Esophagus squamous epithelium (tissue), 5 donors: ENCODE measurements at regions of chr7 and their contacts with region 1.

Region 1: DNA sequence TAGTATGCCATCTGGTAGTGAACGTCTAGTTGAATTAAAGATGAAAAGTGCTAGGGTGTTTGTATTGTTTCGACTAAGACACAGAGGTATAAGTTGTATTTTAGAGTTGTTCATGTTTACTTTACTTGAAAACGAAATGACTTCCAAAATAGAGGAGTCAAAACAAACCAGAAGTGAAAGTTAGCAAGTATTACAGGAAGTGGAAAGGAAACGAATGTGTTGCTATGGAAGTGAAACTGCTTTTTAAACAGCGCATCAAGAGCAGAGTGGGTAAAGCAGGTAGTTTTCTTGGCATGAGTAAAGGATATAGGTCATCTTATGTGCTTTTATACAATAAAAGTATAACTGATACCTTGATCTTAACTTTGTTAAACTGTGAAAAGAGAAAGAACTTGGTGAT is 20.0 kb upstream of the GALNTL5 start:
- DNase-seq: no peak
- H3K4me3 ChIP-seq: no peak overlapping the region
- H3K27ac ChIP-seq: peak overlapping the region in 2 of 4 donors; percentile 42 to 51
- H3K4me1 ChIP-seq: peaks cover 9 to 17% (median 9%) of the 10 kb centered on the region in 3 donors
- H3K27me3 ChIP-seq: no peaks in the 10 kb centered on the region
- CTCF ChIP-seq: no peak
- POLR2A ChIP-seq: no peak

Region 2: DNA sequence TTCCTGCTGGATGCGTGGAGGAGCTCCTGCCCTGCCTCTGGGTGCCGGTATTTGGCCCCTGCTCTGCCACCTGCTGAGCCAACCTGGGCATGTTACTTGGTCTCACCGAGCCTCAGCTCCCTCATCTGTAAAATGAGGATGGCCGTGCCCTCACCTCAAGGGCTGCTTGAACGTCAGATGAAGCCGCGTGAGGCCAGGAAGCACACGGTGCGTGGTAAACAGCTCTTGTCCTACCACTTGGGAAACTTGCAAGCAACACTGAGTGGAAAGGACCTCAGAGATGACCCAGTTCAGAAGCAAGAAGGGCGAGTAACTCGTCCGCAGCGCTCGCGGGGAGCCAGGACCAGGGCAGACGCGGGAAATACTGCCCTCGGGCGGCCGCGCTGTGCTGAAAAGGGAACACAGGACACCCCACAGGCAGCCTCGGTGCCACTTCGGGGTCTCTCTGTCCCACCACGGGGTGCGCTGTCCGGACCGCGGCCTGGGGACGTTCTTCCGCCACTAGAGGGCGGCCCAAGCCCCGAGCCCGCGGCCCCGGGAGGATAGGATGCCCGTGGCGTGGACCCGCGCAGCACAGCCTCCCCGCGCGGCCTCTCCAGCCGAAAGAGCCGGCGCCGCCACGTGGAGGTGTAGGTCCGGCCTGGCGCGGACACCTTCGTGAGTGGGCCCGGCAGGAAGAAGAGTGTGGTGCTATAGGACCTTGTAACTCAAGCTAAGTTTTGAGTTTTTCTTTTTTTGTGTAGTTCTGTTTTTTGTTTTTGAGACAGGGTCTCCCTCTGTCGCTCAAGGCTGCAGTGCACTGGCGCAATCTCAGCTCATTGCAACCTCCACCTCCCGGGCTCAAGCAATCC is 153.4 kb before region 1 on chr7:
- intact Hi-C with region 1: loop called (anchors 5 kb)
- DNase-seq: peak; percentile 24
- H3K4me3 ChIP-seq: peak overlapping the region in 3 of 4 donors; percentile 24 to 59 (median 35)
- H3K27ac ChIP-seq: peak overlapping the region in 2 of 4 donors; percentile 42 to 59
- H3K4me1 ChIP-seq: peaks cover 0 to 29% (median 12%) of the 10 kb centered on the region in 3 donors
- H3K27me3 ChIP-seq: no peaks in the 10 kb centered on the region
- CTCF ChIP-seq: peak; percentile 83 to 92 (median 88)
- POLR2A ChIP-seq: no peak